Panc1 (cell line): ENCODE measurements at regions of chr18 and their contacts with region 1.

Region 1: GRCh38 chr18:63890950-63891304 is 3.4 kb downstream of the SERPINB2 start:
- DNase-seq: no peak
- ATAC-seq: peak; percentile 87
- H3K4me3 ChIP-seq: no peak overlapping the region
- H3K27ac ChIP-seq: no peak overlapping the region
- H3K4me1 ChIP-seq: no peaks in the 10 kb centered on the region
- H3K27me3 ChIP-seq: no peaks in the 10 kb centered on the region
- CTCF ChIP-seq: peak; percentile 42

Region 2: DNA sequence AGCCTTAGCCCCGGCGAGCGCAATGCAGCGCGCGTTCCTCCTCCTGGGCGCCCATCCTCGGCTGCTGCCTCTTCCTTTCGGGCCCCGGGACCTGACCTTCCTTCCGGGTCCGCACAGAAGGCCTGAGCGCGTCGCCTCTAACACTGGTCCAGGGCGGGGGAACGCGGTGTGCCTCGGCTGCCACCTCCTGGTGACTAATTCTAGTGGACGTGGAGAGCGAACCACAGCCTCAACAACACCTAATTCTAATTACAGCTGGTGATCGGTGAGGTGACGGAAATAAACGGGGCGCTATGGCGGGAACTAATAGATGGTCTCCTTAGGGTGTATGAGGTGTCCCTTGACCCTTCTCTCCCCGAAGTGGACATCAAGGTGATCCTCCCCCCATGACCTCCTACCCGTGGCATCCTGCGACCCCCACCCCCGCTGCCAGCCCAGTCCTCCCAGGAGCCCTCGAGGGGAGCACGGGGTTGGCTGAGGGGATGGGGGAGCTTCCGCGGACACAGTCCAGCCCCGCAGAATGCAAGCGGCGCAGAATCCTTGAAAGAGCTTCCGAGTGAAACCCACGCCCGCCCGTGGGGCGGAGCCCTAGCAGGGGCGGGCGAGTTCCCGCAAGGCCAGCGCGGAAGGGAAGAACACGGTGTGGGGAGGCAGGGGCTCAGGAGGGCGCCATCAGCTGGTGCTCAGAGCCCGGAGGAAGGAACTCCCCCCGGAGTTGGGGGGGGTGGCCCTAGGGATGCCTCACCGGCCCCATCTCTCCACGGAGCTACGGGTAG is 45.4 kb after region 1 on chr18:
- CTCF ChIA-PET with region 1: no interaction called
- POLR2A ChIA-PET with region 1: no interaction called
- in situ Hi-C with region 1: no loop called
- intact Hi-C with region 1: loop called (anchors 1 kb)
- DNase-seq: peak; percentile 22
- ATAC-seq: peak; percentile 99
- H3K4me3 ChIP-seq: peak overlapping the region; percentile 27 to 45
- H3K27ac ChIP-seq: no peak overlapping the region
- H3K4me1 ChIP-seq: no peaks in the 10 kb centered on the region; the same call in 1 of the 2 replicates
- H3K27me3 ChIP-seq: peaks cover 5% of the 10 kb centered on the region; the same call in 1 of the 2 replicates
- CTCF ChIP-seq: peak; percentile 76

Region 3: DNA sequence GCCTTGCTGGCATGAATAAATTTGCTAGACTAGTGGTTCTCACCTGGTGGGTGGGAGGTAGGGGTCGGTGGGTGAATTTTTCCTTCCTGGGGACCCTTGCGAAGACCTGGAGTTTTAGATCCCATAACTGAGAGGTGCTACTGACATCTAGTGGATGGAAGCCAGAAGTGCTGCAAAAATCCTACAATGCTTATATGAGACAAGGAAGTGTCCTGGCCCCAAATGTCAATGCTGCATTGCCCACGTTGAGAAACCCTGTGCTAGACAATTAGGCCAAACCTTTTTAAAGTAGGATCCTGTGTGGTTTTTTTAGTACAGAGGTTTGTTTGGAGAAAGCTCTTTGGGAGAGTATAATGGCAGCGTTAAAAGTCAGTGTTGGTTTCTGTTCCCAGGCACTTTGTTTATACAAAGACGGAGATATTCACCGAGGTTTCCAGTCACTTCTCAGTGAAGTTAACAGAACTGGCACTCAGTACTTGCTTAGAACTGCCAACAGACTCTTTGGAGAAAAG is 88.5 kb after region 1 on chr18:
- CTCF ChIA-PET with region 1: no interaction called
- POLR2A ChIA-PET with region 1: no interaction called
- in situ Hi-C with region 1: no loop called
- intact Hi-C with region 1: loop called (anchors 5 kb)
- DNase-seq: peak; percentile 56
- ATAC-seq: peak; percentile 78
- H3K4me3 ChIP-seq: peak overlapping the region; percentile 11 to 32; a peak in 3 of 4 replicates
- H3K27ac ChIP-seq: peak overlapping the region; percentile 51; the same call in 1 of the 2 replicates
- H3K4me1 ChIP-seq: no peaks in the 10 kb centered on the region
- H3K27me3 ChIP-seq: no peaks in the 10 kb centered on the region
- CTCF ChIP-seq: peak; percentile 79

Region 4: DNA sequence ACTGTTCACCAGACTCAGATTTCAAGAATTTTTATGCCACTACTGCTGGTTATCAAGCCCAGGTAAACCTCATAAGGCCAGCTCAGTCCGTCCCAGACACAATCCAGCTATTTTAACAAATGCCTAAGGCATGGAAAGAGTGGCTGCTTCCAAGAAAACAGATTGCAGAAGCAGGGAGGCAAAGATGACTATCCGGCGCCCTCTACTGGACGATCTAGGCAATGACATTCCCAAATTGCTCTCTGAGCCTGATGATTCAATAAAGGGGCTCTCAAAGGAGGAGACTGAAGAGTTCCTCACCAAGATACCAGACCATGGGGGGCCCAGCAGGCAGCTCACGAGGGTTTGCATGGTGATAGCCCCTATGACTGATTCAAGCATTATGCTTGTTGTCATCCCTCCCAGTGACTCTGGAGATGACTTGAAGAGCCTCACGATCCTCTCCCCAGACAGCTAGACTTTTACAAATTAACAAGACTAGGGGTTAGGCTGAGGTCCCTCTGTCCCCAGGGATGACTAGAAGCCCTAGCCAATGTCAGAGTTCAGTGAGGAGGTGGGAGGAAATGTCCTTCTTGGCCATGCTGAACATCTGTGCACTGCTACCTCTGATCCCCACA is 104.0 kb after region 1 on chr18:
- CTCF ChIA-PET with region 1: no interaction called
- POLR2A ChIA-PET with region 1: no interaction called
- in situ Hi-C with region 1: no loop called
- intact Hi-C with region 1: loop called (anchors 5 kb)
- DNase-seq: no peak
- ATAC-seq: no peak
- H3K4me3 ChIP-seq: no peak overlapping the region
- H3K27ac ChIP-seq: no peak overlapping the region
- H3K4me1 ChIP-seq: no peaks in the 10 kb centered on the region
- H3K27me3 ChIP-seq: no peaks in the 10 kb centered on the region
- CTCF ChIP-seq: peak; percentile 74